ENCODE measurements at regions of chr5 and their contacts with region 1.

Region 1: DNA sequence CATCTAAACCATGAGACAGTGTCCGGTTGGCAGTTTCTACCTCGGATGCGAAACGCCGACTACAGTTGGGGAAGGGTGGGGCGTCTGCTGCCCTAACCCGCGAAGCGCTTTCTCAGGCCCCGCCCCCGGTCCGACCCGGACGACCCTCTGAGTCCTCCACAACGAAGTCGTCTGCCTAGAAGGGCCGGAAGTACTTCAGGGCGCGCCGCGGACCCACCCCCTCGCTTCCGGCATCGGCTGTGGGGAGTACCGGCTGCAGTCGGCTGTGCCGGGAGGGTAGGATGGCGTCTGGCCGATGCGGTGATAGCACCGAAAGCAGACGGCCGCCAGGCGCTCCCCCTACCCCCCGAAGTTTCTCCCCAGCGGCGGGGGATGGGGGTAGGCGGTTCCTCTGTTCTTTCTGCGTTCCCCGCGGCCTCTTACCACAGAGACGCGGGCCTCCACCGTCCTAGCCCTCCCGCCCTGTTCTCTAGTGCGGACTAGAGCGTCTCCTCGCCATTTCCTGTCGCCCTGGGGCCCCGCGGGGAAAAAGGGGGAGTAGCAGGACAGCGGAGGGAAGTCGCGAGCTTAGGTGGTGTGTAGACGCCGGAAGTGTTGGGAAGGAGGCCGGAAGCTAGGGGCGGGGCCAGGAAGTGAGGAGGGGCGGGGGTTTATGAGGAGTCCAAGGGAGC is at the start of gene TRIM41:
- DNase-seq: peak; percentile 98
- H3K4me3 Mint-ChIP-seq: peak within 1 kb of the TSS; percentile 98
- H3K27ac Mint-ChIP-seq: peak within 1 kb of the TSS; percentile 98
- H3K4me1 Mint-ChIP-seq: peaks cover 48% of the 10 kb centered on the region
- H3K27me3 Mint-ChIP-seq: peaks cover 7% of the 10 kb centered on the region
- total RNA-seq, gene TRIM41: 35.3 to 36.4 TPM

Region 2: GRCh38 chr5:180802325-180803180 is 420.6 kb before region 1 on chr5 and contains the start of gene MGAT1:
- CTCF ChIA-PET with region 1: no interaction called
- POLR2A ChIA-PET with region 1: no interaction called
- intact Hi-C with region 1: loop called (anchors 2 kb)
- DNase-seq: peak; percentile 84
- H3K4me3 Mint-ChIP-seq: peak within 1 kb of the TSS; percentile 85
- H3K27ac Mint-ChIP-seq: peak within 1 kb of the TSS; percentile 96
- H3K4me1 Mint-ChIP-seq: peaks cover 75% of the 10 kb centered on the region
- H3K27me3 Mint-ChIP-seq: no peaks in the 10 kb centered on the region
- total RNA-seq, gene MGAT1: 101 to 106 TPM

Region 3: GRCh38 chr5:181133610-181134231 is 89.5 kb before region 1 on chr5:
- CTCF ChIA-PET with region 1: no interaction called
- POLR2A ChIA-PET with region 1: no interaction called
- intact Hi-C with region 1: no loop called
- DNase-seq: no peak
- H3K4me3 Mint-ChIP-seq: no peak overlapping the region
- H3K27ac Mint-ChIP-seq: no peak overlapping the region
- H3K4me1 Mint-ChIP-seq: no peaks in the 10 kb centered on the region
- H3K27me3 Mint-ChIP-seq: peaks cover 24% of the 10 kb centered on the region

Region 4: GRCh38 chr5:181153814-181154213 is 69.4 kb before region 1 on chr5:
- CTCF ChIA-PET with region 1: no interaction called
- POLR2A ChIA-PET with region 1: no interaction called
- intact Hi-C with region 1: no loop called
- DNase-seq: peak; percentile 50
- H3K4me3 Mint-ChIP-seq: no peak overlapping the region
- H3K27ac Mint-ChIP-seq: no peak overlapping the region
- H3K4me1 Mint-ChIP-seq: peaks cover 11% of the 10 kb centered on the region
- H3K27me3 Mint-ChIP-seq: peaks cover 24% of the 10 kb centered on the region

Region 5: DNA sequence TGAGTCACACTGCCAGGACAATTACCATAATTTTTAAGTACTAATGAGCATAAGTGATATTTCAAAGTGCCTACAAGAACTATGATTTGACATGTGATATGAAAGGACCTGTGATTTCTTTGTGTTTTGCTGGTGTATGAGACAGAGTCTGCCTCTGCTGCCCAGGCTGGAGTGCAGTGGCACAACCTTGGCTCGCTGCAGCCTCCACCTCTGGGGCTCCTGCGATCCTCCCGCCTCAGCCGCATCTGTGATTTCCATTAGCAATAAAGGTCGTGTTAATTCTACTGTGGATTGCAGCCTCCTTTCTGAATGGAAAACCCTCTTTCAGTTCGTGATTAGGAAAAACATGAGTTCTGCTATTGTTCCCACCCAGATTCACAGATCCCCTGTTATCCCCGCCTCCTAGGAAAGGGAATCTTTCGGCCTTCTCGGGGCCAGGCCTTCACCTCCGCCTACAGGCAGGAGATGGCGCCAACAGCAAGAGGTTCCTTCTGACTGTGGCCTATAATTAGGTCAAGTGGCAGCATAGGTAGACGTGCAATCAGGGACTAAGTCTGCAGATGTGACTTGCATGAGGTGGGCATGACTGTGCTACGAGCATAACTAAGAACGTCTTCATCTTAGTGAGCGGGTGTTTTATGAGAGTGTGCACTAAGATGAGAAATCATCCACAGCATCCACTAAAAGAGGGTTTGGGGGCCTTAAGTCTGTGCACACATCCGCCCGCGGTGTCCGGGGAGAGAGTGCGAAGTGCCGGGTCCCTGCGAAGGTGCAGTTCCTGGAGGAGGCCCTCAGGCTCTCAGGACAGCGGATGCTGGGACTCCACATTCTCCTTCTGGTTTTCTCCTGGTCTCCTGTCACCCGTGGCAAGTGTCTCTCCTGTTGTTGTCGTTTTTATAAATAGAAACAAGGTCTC is 41.3 kb before region 1 on chr5:
- CTCF ChIA-PET with region 1: interaction called, 10 read pairs
- POLR2A ChIA-PET with region 1: no interaction called
- intact Hi-C with region 1: loop called (anchors 1 kb)
- DNase-seq: peak; percentile 81
- H3K4me3 Mint-ChIP-seq: no peak overlapping the region
- H3K27ac Mint-ChIP-seq: peak overlapping the region; percentile 4
- H3K4me1 Mint-ChIP-seq: peaks cover 28% of the 10 kb centered on the region
- H3K27me3 Mint-ChIP-seq: peaks cover 7% of the 10 kb centered on the region

Region 6: GRCh38 chr5:181207214-181208107 is 15.7 kb before region 1 on chr5:
- CTCF ChIA-PET with region 1: interaction called, 9 read pairs
- POLR2A ChIA-PET with region 1: interaction called, 22 read pairs
- intact Hi-C with region 1: loop called (anchors 1 kb)
- DNase-seq: peak; percentile 90
- H3K4me3 Mint-ChIP-seq: peak overlapping the region; percentile 86
- H3K27ac Mint-ChIP-seq: peak overlapping the region; percentile 93
- H3K4me1 Mint-ChIP-seq: peaks cover 27% of the 10 kb centered on the region
- H3K27me3 Mint-ChIP-seq: peaks cover 17% of the 10 kb centered on the region

Region 7: GRCh38 chr5:181243512-181244343 is 20.5 kb after region 1 on chr5 and contains the start of gene RACK1:
- CTCF ChIA-PET with region 1: interaction called, 10 read pairs
- POLR2A ChIA-PET with region 1: interaction called, 100 read pairs
- intact Hi-C with region 1: loop called (anchors 1 kb)
- DNase-seq: peak; percentile 93
- H3K4me3 Mint-ChIP-seq: peak within 1 kb of the TSS; percentile 98
- H3K27ac Mint-ChIP-seq: peak within 1 kb of the TSS; percentile 99
- H3K4me1 Mint-ChIP-seq: peaks cover 51% of the 10 kb centered on the region
- H3K27me3 Mint-ChIP-seq: no peaks in the 10 kb centered on the region
- total RNA-seq, gene RACK1: 2,635 to 2,697 TPM